ENCODE measurements at regions of chr6 and their contacts with region 1.

Region 1: DNA sequence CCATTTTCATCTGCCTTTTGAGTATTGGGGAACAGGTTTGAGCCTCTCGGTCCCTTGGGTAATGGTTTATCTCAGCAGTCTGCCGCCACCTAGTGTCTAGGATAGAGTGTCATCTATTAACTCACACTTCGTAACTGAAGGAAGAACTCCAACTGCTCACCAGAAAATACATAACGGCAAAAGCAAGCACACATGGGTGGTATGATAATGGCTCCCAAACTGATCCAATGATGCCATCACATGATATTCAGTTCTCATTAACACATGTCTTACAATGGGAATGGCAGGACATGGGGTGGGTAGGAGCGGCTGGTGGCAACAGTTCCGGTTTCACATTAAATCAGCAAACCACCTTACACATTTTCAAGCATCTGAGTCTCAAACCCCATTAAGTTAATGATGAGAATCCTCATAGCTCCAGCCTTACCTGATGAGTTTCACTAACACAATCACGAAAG is 110.7 kb upstream of the PHACTR1 start:
- DNase-seq: peak; percentile 81
- H3K4me3 ChIP-seq: no peak overlapping the region
- H3K27ac ChIP-seq: no peak overlapping the region
- H3K4me1 ChIP-seq: peaks cover 42% of the 10 kb centered on the region
- H3K27me3 ChIP-seq: no peaks in the 10 kb centered on the region
- CTCF ChIP-seq: peak; percentile 58 to 61
- POLR2A ChIP-seq: no peak

Region 2: GRCh38 chr6:11770546-11771466 is 835.1 kb before region 1 on chr6:
- CTCF ChIA-PET with region 1: no interaction called
- POLR2A ChIA-PET with region 1: no interaction called
- dilution Hi-C with region 1: no loop called
- intact Hi-C with region 1: loop called (anchors 5 kb)
- DNase-seq: peak; percentile 93
- H3K4me3 ChIP-seq: no peak overlapping the region
- H3K27ac ChIP-seq: peak overlapping the region; percentile 94
- H3K4me1 ChIP-seq: peaks cover 58% of the 10 kb centered on the region
- H3K27me3 ChIP-seq: no peaks in the 10 kb centered on the region
- CTCF ChIP-seq: no peak
- POLR2A ChIP-seq: peak; percentile 84

Region 3: GRCh38 chr6:12233693-12234571 is 372.0 kb before region 1 on chr6:
- CTCF ChIA-PET with region 1: interaction called, 6 read pairs
- POLR2A ChIA-PET with region 1: no interaction called
- dilution Hi-C with region 1: no loop called
- intact Hi-C with region 1: loop called (anchors 1 kb)
- DNase-seq: peak; percentile 86
- H3K4me3 ChIP-seq: no peak overlapping the region
- H3K27ac ChIP-seq: no peak overlapping the region
- H3K4me1 ChIP-seq: no peaks in the 10 kb centered on the region
- H3K27me3 ChIP-seq: no peaks in the 10 kb centered on the region
- CTCF ChIP-seq: peak; percentile 59 to 73
- POLR2A ChIP-seq: no peak

Region 4: GRCh38 chr6:12313992-12314805 is 291.7 kb before region 1 on chr6:
- CTCF ChIA-PET with region 1: interaction called, 67 read pairs
- POLR2A ChIA-PET with region 1: no interaction called
- dilution Hi-C with region 1: no loop called
- intact Hi-C with region 1: no loop called
- DNase-seq: peak; percentile 89
- H3K4me3 ChIP-seq: no peak overlapping the region
- H3K27ac ChIP-seq: peak overlapping the region; percentile 77
- H3K4me1 ChIP-seq: peaks cover 23% of the 10 kb centered on the region
- H3K27me3 ChIP-seq: no peaks in the 10 kb centered on the region
- CTCF ChIP-seq: no peak
- POLR2A ChIP-seq: no peak

Region 5: GRCh38 chr6:12504319-12504966 is 101.5 kb before region 1 on chr6:
- CTCF ChIA-PET with region 1: interaction called, 16 read pairs
- POLR2A ChIA-PET with region 1: no interaction called
- dilution Hi-C with region 1: no loop called
- intact Hi-C with region 1: loop called (anchors 1 kb)
- DNase-seq: no peak
- H3K4me3 ChIP-seq: no peak overlapping the region
- H3K27ac ChIP-seq: no peak overlapping the region
- H3K4me1 ChIP-seq: no peaks in the 10 kb centered on the region
- H3K27me3 ChIP-seq: no peaks in the 10 kb centered on the region
- CTCF ChIP-seq: peak; percentile 25 to 46
- POLR2A ChIP-seq: no peak

Region 6: GRCh38 chr6:12890171-12890790 is 284.4 kb after region 1 on chr6:
- CTCF ChIA-PET with region 1: interaction called, 6 read pairs
- POLR2A ChIA-PET with region 1: no interaction called
- dilution Hi-C with region 1: no loop called
- intact Hi-C with region 1: loop called (anchors 1 kb)
- DNase-seq: peak; percentile 3
- H3K4me3 ChIP-seq: no peak overlapping the region
- H3K27ac ChIP-seq: no peak overlapping the region
- H3K4me1 ChIP-seq: no peaks in the 10 kb centered on the region
- H3K27me3 ChIP-seq: peaks cover 0 to 10% of the 10 kb centered on the region in 2 experiments
- CTCF ChIP-seq: peak; percentile 66 to 70
- POLR2A ChIP-seq: no peak